ENCODE measurements at regions of chr13 and their contacts with region 1.

Region 1: GRCh38 chr13:106961219-106961618 is 393.3 kb upstream of the ARGLU1 start:
- DNase-seq: no peak
- H3K4me3 ChIP-seq: no peak overlapping the region
- H3K27ac ChIP-seq: no peak overlapping the region
- H3K4me1 ChIP-seq: no peaks in the 10 kb centered on the region
- H3K27me3 ChIP-seq: no peaks in the 10 kb centered on the region
- CTCF ChIP-seq: no peak
- POLR2A ChIP-seq: no peak

Region 2: DNA sequence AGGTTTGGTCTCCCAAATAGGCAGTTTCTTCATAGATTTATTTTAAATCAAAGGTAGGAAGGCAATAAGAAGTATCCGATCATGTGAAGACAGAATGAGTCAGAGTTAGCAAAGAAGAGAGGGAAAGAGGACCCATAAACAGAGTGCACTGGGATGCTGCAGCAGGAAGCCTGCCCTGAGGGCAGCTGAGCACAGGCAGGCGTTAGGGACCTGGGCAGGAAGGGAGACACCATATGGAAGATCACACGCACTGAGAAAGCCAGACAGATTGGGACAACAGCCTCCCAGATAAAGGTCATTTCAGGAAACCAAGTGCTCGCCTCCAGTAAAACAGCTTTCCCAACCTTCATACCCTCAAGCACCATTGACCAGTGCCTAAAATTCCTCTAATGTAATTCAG is 1023.8 kb before region 1 on chr13:
- intact Hi-C with region 1: loop called in 1 of 2 experiments (anchors 10 kb)
- DNase-seq: no peak
- H3K4me3 ChIP-seq: no peak overlapping the region
- H3K27ac ChIP-seq: no peak overlapping the region
- H3K4me1 ChIP-seq: no peaks in the 10 kb centered on the region
- H3K27me3 ChIP-seq: no peaks in the 10 kb centered on the region
- CTCF ChIP-seq: no peak
- POLR2A ChIP-seq: no peak